ENCODE measurements at regions of chr15 and their contacts with region 1.

Region 1: DNA sequence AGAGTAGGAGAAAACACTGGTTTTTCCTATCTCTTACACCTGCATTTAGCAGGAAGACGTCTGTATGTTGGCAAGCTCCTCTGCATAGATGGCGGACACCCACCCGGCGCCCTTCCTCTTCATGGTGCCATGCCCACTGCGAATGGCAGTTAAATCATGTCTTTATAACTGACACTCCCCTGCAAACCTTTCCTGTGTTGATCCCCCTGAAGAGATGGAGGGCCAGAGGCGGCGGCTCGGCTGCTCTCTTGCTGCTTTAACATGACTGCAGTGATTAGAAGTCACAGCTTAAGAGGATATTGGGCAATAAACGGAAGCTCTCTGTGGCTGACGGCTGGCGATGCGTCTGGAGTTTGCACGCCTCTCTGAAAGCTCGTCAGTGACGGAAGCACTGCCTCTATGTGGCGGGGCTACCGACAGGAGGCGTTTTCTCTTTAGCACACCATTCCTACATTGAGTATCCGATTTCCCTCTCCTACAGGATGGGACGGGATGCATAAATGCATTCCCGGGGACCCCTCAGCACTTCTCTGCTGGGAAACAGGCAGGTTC is 25.5 kb upstream of the SNRPA1 start:
- DNase-seq: peak; percentile 91 to 97 (median 96)
- H3K4me3 ChIP-seq: peak overlapping the region in 1 of 7 experiments; percentile 48
- H3K27ac ChIP-seq: no peak overlapping the region
- H3K4me1 ChIP-seq: peaks cover 0 to 17% (median 12%) of the 10 kb centered on the region in 4 experiments
- H3K27me3 ChIP-seq: peaks cover 0 to 88% (median 25%) of the 10 kb centered on the region in 5 experiments

Region 2: DNA sequence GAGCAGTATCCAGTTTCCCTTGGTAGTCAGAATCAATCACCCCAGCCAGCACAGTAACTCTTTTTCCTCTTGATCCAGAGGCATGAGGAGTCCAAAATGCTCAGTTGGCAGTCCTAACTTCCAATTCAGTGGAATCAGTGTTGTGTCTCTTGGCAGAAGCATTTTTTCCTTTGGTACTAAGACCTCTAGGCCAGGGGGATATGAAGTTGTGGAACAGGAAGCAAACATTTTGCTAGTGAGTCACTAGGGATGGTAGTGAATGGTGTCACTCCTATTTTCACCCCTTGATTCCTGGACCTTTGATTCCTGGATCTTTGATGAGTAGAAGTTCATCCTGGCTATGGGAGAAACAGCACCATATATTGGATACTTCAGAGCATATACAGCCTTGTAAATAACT is 511.4 kb before region 1 on chr15:
- CTCF ChIA-PET with region 1: no interaction called
- POLR2A ChIA-PET with region 1: no interaction called
- DNase-seq: no peak
- H3K4me3 ChIP-seq: no peak overlapping the region
- H3K27ac ChIP-seq: no peak overlapping the region
- H3K4me1 ChIP-seq: no peaks in the 10 kb centered on the region
- H3K27me3 ChIP-seq: no peaks in the 10 kb centered on the region

Region 3: DNA sequence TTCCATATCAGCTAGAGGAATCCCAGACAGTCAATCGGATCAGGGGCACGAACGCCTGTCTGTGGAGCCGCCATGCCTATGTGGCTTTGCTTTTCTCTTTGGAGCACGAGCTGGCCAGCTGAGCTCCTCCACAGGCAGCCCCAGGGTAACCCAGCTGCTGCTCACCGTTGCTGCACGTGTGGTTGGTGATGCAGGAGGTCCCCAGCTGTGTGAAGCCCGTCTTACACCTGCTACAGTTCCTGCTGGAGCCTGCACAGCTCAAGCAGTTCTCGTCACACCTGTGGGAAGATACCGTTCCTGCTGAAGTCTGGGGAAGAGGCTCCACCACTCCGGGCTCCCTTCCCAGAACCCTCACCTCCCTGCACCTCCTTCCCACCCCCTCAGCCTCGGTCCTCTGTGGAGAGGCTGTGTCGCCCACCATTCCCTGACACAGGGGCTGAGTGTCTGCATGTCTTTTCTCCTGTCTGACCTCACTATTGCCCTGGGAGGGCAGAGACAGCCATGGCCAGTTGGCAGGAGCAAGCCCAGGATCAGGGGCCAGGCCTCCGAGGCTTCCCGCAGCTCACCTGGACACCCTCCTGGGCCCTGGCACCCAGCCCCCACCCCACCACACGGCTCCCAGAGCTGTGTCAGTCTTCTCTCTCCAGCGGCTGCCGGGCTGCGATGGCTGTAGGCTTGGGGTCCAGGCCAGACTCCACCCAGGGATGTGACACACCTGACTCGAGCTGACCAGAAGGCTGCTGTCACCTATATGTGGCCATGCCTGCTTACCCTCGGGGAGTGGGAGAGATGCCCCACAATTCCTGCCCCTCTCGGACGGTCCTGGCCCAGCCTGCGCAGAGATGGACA is 13.3 kb before region 1 on chr15:
- CTCF ChIA-PET with region 1: interaction called, 40 read pairs
- POLR2A ChIA-PET with region 1: no interaction called
- DNase-seq: no peak
- H3K4me3 ChIP-seq: no peak overlapping the region
- H3K27ac ChIP-seq: no peak overlapping the region
- H3K4me1 ChIP-seq: no peaks in the 10 kb centered on the region
- H3K27me3 ChIP-seq: peaks cover 0 to 66% (median 10%) of the 10 kb centered on the region in 5 experiments

Region 4: GRCh38 chr15:101406796-101407195 is 86.2 kb after region 1 on chr15:
- CTCF ChIA-PET with region 1: no interaction called
- POLR2A ChIA-PET with region 1: no interaction called
- DNase-seq: no peak
- H3K4me3 ChIP-seq: no peak overlapping the region
- H3K27ac ChIP-seq: no peak overlapping the region
- H3K4me1 ChIP-seq: peaks cover 0 to 2% (median 0%) of the 10 kb centered on the region in 4 experiments
- H3K27me3 ChIP-seq: no peaks in the 10 kb centered on the region

Region 5: DNA sequence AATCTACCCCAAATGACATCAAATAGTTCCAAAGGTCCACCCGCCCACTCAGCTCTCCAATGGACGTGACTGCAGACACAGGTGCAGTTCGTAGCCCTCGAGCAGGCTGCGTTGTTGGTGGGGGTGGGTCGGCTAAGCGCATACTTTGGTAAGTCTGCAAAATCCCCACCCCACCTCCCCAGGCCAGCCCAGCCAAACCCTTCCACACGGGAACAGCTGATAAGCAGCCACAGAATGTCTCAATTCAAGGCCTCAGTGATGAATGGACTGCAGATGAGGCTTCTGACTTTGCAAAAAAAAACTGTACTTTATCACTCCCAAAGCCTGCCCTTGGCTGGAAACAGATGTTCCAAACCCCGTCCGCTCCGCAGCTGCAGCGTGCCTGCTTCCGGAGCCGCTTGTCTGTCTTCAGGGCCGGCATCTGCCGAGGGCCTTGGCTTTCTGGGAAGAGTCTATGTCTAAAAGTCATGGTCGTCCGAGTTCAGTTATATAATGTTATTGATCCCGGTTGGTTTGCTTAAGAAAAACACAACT is 130.8 kb after region 1 on chr15:
- CTCF ChIA-PET with region 1: interaction called, 12 read pairs
- POLR2A ChIA-PET with region 1: interaction called, 4 read pairs
- DNase-seq: peak; percentile 91 to 99 (median 98)
- H3K4me3 ChIP-seq: peak overlapping the region in 3 of 7 experiments; percentile 28 to 51 (median 38)
- H3K27ac ChIP-seq: peak overlapping the region in 1 of 2 experiments; percentile 51
- H3K4me1 ChIP-seq: peaks cover 7 to 65% (median 46%) of the 10 kb centered on the region in 4 experiments
- H3K27me3 ChIP-seq: peaks cover 0 to 4% (median 0%) of the 10 kb centered on the region in 5 experiments